CD4-positive, alpha-beta memory T cell (primary cell): ENCODE measurements at regions of chr1 and their contacts with region 1.

Region 1: DNA sequence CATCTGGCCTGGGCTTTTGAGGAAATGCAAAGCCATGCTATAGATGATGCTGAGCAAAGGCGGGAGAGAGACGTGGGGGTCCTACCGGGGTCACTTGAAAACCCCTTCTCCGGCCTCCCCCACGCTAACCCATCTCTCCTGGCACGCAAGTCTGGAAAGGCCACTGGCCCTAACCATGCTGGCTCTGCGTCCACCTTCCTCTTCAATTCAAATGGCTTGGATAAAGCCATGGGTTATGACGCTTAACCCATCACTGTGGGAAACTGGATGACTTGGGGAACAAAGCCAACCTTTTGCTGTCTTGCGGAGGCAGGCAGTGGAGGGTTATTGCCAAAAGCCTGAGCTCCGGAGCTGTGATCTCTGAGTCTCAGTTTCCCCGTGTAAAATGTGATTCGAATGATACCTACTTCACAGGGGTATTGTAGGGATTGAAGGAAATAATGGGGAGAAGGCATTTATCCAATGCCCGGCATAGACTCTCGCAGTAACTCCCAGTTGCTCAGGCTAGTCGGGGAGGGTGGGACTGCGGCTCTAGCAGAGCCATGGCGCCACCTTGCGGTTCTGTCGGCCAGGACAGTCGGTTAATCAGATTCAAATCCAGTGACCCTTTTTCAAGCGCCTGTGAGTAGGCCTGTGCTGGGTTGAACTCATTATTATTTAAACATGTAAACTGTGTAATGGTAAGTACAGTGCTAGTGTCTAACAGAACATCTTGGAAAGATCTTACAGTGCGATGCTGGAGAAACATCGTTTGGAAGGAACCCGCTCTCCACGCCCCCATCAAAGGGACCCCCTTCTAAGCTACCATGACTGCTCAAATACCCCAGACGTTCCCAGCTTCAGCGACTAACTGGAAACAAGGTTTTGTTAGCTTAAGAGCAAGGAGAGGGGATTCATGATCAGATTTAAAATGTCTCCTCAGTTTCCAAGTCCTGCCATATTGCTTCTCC is 20.3 kb downstream of the NEK2 start:
- DNase-seq: peak; percentile 71 to 75 (median 74)
- H3K4me3 ChIP-seq: no peak overlapping the region
- H3K4me3 Mint-ChIP-seq: no peak overlapping the region
- H3K27ac ChIP-seq: no peak overlapping the region
- H3K27ac Mint-ChIP-seq: no peak overlapping the region
- H3K4me1 ChIP-seq: no peaks in the 10 kb centered on the region
- H3K4me1 Mint-ChIP-seq: peaks cover 0 to 2% (median 0%) of the 10 kb centered on the region in 4 donors
- H3K27me3 ChIP-seq: no peaks in the 10 kb centered on the region
- H3K27me3 Mint-ChIP-seq: peaks cover 0 to 2% of the 10 kb centered on the region in 2 donors

Region 2: GRCh38 chr1:210407207-210407886 is 1247.8 kb before region 1 on chr1:
- CTCF ChIA-PET with region 1: interaction called, 3 read pairs
- POLR2A ChIA-PET with region 1: no interaction called
- intact Hi-C with region 1: loop called (anchors 1 kb)
- DNase-seq: peak; percentile 54 to 71 (median 62)
- H3K4me3 ChIP-seq: no peak overlapping the region
- H3K4me3 Mint-ChIP-seq: no peak overlapping the region
- H3K27ac ChIP-seq: no peak overlapping the region
- H3K27ac Mint-ChIP-seq: no peak overlapping the region
- H3K4me1 ChIP-seq: no peaks in the 10 kb centered on the region
- H3K4me1 Mint-ChIP-seq: peaks cover 0 to 2% (median under 1%) of the 10 kb centered on the region in 4 donors
- H3K27me3 ChIP-seq: no peaks in the 10 kb centered on the region
- H3K27me3 Mint-ChIP-seq: no peaks in the 10 kb centered on the region

Region 3: DNA sequence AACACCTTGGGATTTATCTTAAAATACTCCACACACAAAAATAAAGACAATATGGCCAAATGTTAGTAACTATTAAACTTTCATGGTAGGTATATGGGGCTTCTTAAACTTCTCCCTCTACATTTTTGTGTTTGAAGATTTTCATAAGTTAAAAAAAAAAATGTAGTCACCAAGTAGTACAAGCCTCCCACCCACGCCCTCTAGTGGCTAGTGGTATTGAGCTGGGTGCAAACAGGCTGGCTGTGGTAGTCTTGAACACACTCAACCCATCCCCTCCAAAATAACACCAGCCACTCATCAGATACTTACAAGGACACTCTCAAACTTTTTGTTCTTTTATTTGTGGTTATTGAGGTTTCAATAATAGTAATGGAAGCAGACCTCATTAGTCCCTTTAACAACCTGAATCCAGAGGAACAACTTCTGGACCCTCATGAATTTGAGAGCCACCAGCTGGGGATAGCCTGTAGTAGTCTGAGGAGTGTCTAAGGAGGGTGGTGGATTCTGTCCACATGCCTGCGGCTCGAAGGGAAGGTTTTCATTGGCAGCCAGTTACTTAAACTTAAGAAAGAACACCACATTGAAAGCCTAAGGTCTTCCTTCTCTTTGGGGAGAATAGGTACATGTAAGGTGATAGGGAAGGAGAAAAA is 178.8 kb before region 1 on chr1:
- CTCF ChIA-PET with region 1: interaction called, 3 read pairs
- POLR2A ChIA-PET with region 1: no interaction called
- intact Hi-C with region 1: loop called (anchors 2 kb)
- DNase-seq: peak; percentile 69 to 73 (median 71)
- H3K4me3 ChIP-seq: no peak overlapping the region
- H3K4me3 Mint-ChIP-seq: no peak overlapping the region
- H3K27ac ChIP-seq: no peak overlapping the region
- H3K27ac Mint-ChIP-seq: no peak overlapping the region
- H3K4me1 ChIP-seq: no peaks in the 10 kb centered on the region
- H3K4me1 Mint-ChIP-seq: peaks cover 3 to 6% (median 4%) of the 10 kb centered on the region in 4 donors
- H3K27me3 ChIP-seq: peaks cover 10% of the 10 kb centered on the region
- H3K27me3 Mint-ChIP-seq: peaks cover 14 to 25% of the 10 kb centered on the region in 2 donors

Region 4: GRCh38 chr1:211643324-211644212 is 11.5 kb before region 1 on chr1:
- CTCF ChIA-PET with region 1: interaction called, 13 read pairs
- POLR2A ChIA-PET with region 1: no interaction called
- intact Hi-C with region 1: no loop called
- DNase-seq: peak in 3 of 5 donors; percentile 11 to 24 (median 18)
- H3K4me3 ChIP-seq: no peak overlapping the region
- H3K4me3 Mint-ChIP-seq: peak overlapping the region in 3 of 8 donors; percentile 2 to 40 (median 13)
- H3K27ac ChIP-seq: no peak overlapping the region
- H3K27ac Mint-ChIP-seq: peak overlapping the region in 1 of 7 donors; percentile 1
- H3K4me1 ChIP-seq: peaks cover 11% of the 10 kb centered on the region
- H3K4me1 Mint-ChIP-seq: peaks cover 8 to 14% (median 10%) of the 10 kb centered on the region in 4 donors
- H3K27me3 ChIP-seq: no peaks in the 10 kb centered on the region
- H3K27me3 Mint-ChIP-seq: peaks cover 0 to 2% of the 10 kb centered on the region in 2 donors